Activated CD4-positive, alpha-beta T cell treated with anti-CD3 and anti-CD28 coated beads, Interleukin-2, amount 10 ng/mL, durations not matched to agents 24 days and 14 days (primary cell): ENCODE measurements at regions of chr19 and their contacts with region 1.

Region 1: DNA sequence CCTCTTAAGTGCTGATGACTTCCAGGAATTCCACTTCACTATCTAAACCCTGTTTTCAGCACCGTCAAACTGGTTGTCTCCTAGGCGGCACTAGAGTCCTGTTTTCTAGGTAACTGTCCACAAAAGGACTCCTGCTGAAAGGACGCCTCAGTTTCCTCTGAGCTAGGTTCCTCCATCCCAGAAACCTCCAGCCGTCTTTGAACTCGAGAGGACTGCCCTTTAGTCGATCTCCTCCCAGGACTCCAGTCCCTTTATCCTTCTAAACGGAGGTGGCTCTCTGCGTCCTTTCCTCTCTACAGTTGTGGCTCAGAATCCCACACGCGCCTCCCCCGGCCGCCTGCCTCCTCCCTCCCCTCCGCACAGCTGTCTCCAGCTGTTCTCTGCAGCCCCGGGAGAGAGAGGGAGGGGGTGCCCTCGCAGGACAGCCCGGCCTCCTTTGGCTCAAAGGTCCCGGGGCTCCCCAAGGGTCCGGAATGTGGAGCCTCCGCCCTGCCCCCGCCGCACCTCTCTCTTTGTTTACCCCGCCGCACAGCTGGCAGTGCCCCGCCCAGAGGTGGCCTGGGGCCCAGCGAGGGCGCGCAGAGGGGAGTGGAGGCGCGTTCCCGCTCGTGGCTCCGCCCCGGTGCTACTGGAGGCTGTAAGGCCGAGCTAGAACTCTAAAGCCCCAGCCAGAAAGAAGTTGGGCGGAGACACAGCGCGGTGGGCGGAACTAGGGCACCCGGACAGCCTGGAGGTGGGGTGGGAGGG is 2.4 kb downstream of the LTBP4 start:
- DNase-seq: peak; percentile 99
- H3K4me3 Mint-ChIP-seq: peak overlapping the region; percentile 94
- H3K27ac Mint-ChIP-seq: peak overlapping the region; percentile 92
- H3K4me1 Mint-ChIP-seq: peaks cover 60% of the 10 kb centered on the region
- H3K27me3 Mint-ChIP-seq: peaks cover 27% of the 10 kb centered on the region

Region 2: DNA sequence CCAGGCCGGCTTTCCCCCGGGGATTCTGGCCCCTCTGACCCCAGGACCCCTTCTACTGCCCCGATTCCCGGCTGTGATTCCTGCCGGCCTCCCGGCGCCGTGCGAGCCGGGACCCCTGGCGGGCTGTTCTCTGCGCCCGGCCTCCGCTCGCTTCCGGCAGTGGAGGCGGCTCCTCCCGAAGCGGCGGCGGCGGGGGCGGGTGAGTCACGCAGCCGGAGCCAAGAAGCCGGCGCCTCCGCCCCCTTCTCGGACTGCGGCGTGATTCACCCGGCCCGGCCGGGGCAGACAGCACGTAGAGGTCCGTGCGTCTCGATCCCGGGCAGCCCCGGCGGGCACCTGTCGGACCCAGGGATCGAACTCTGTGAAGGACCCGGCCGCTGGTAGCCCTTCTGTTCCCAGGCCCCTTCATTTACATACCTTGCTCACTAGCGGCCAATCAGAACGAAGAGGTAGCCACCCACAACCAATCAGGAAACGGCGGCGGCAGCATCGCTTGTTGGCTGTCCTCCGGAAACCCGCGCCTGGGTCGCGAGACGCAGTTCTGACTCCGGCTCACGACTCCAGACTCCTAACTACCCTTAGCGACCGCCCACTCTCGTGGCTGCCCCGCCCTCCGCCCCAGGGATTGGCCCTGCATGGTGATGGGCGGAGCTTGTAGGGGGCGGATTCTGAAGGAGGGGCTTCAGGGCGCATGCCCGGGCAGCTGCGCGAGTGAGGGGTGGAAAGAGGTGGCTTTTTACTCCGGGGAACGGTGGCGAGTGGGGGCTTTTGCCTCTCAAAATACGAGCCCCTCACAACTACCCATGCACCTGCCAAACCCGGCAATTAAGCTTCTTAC is 177.9 kb before region 1 on chr19 and contains the start of gene SERTAD1:
- intact Hi-C with region 1: loop called (anchors 5 kb)
- DNase-seq: peak; percentile 100
- H3K4me3 Mint-ChIP-seq: peak within 1 kb of the TSS; percentile 92
- H3K27ac Mint-ChIP-seq: peak within 1 kb of the TSS; percentile 91
- H3K4me1 Mint-ChIP-seq: peaks cover 26% of the 10 kb centered on the region
- H3K27me3 Mint-ChIP-seq: peaks cover 5% of the 10 kb centered on the region
- total RNA-seq, gene SERTAD1: 19.3 and 20.8 TPM in 2 replicates

Region 3: GRCh38 chr19:40561947-40562346 is 41.6 kb before region 1 on chr19:
- intact Hi-C with region 1: no loop called
- DNase-seq: no peak
- H3K4me3 Mint-ChIP-seq: no peak overlapping the region
- H3K27ac Mint-ChIP-seq: no peak overlapping the region
- H3K4me1 Mint-ChIP-seq: peaks cover 3% of the 10 kb centered on the region
- H3K27me3 Mint-ChIP-seq: peaks cover 31% of the 10 kb centered on the region

Region 4: DNA sequence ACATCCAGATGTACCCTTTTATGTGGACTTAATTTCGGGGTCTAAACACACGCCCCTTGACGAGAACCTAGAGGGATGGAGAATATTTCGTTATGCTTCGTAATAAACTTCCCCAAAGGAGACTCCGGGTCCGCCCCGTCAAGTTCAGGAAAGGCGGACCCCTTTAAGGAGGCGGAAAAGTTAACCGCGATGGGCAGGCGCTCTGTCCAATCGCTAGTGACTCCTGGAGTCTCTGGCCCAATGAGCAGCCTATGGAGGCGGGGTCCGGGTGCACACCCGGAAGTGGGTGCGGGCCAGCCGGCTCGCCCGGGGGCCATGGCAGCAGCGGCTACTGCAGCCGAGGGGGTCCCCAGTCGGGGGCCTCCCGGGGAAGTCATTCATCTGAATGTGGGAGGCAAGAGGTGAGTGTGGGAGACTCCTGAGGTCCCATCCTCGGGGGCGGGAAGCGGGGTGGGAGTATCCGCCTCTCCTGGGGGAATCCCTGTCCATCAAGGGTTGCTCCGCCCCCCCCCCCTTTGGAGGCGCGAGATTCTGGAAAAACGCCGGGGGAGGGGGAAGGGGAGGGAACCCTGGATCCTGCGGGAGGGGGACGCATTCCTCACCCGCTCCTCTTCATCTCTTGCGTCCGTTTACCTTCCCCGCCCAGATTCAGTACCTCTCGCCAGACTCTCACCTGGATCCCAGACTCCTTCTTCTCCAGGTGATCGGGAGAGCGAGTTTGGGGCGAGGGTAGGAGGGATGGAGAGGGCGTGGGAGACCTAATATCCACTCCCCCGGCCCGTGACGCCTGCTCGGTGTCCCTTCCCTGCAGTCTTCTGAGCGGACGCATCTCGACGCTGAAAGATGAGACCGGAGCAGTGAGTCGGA is 26.7 kb before region 1 on chr19 and contains the start of gene SHKBP1:
- intact Hi-C with region 1: loop called (anchors 2 kb)
- DNase-seq: peak; percentile 98
- H3K4me3 Mint-ChIP-seq: peak within 1 kb of the TSS; percentile 86
- H3K27ac Mint-ChIP-seq: peak within 1 kb of the TSS; percentile 82
- H3K4me1 Mint-ChIP-seq: peaks cover 16% of the 10 kb centered on the region
- H3K27me3 Mint-ChIP-seq: no peaks in the 10 kb centered on the region
- total RNA-seq, gene SHKBP1: 111 and 113 TPM in 2 replicates

Region 5: DNA sequence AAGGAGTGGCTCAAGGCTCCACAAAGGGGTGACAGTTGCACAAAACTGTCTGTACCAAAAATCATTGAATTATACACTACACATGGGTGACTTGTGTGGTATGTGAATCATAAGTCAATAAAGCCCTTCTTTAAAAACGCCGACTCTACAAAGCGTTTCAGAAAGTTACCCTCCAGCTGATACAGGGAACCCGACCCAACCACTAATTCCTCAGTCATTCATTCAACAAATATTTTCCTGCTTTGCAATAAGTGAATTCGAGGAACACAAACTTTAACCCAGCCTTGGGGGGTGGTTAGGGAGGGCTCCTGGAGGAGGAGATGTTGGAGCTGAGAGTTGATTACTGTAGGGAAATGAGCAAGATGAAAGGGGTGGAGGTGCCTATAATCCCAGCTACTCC is 29.6 kb after region 1 on chr19:
- intact Hi-C with region 1: loop called (anchors 1 kb)
- DNase-seq: no peak
- H3K4me3 Mint-ChIP-seq: no peak overlapping the region
- H3K27ac Mint-ChIP-seq: no peak overlapping the region
- H3K4me1 Mint-ChIP-seq: peaks cover 11% of the 10 kb centered on the region
- H3K27me3 Mint-ChIP-seq: peaks cover 12% of the 10 kb centered on the region